ENCODE measurements at regions of chr14 and their contacts with region 1.

Region 1: DNA sequence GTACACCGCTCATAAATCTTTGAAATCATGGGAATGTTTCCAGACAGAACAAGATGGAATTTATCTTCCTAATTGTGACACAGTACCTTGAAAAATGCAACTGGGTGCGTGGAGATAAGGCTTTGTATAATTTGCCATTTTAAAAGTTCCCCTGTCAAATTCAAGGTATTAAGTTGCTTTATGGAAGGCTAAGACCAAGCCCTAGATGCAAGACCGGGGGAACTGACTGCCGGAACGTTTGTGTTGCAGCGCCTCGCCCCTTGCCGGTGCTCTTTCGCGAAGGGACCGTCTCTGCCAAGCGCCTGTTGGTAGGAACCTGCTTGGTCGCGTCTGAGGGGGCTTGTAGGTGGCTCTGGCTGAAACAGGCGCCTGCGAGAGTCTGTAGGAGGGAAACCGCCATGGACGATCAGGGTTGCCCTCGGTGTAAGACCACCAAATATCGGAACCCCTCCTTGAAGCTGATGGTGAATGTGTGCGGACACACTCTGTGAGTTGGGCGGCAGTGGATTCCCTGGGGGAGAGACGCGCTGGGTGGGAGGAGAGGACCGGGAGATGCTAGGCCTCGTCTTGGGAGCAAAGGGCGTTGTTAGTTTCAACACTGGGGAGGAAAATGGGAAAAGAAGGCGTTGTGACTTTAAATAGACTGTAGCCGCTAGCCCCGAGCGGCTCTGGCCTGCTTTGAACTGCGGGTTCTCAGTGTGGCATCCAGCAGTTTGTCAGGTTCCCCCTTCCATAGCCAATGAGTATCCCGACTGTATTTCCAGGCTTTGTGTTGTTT is at the start of gene MNAT1:
- DNase-seq: peak; percentile 90
- H3K4me3 ChIP-seq: peak within 1 kb of the TSS; percentile 38 to 75 (median 59)
- H3K27ac ChIP-seq: peak within 1 kb of the TSS; percentile 32
- H3K4me1 ChIP-seq: peaks cover 16% of the 10 kb centered on the region
- H3K27me3 ChIP-seq: peaks cover 9 to 25% of the 10 kb centered on the region in 2 experiments
- CTCF ChIP-seq: no peak
- POLR2A ChIP-seq: peak; percentile 77
- total RNA-seq, gene MNAT1: 55.7 and 58.0 TPM in 2 replicates

Region 2: GRCh38 chr14:61188978-61189808 is 454.5 kb after region 1 on chr14:
- CTCF ChIA-PET with region 1: no interaction called
- POLR2A ChIA-PET with region 1: no interaction called
- dilution Hi-C with region 1: no loop called
- intact Hi-C with region 1: loop called (anchors 5 kb)
- DNase-seq: peak; percentile 70
- H3K4me3 ChIP-seq: peak overlapping the region; percentile 9 to 50 (median 32)
- H3K27ac ChIP-seq: peak overlapping the region; percentile 44
- H3K4me1 ChIP-seq: peaks cover 44% of the 10 kb centered on the region
- H3K27me3 ChIP-seq: no peaks in the 10 kb centered on the region
- CTCF ChIP-seq: peak; percentile 70 to 85
- POLR2A ChIP-seq: no peak